ENCODE measurements at regions of chr16 and their contacts with region 1.

Region 1: DNA sequence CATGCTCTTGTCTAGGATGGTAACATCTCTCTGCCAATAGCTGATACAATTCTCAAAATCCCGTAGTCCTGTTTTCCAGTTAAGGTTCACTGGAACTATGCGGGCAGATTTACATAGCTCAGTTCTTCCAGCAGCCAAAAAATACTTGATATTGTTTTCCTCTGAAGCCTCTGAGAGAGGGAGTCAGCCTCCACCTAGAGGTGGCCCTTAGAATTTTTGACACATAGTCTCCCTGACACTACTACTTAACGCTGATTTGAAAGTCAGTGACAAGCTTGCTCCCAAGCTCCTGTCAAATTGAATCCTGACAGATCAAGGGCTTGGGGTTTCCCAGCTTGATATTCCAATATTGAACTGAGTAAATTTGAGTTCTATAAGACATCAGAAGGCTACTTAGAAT is 1780.1 kb downstream of the TP53TG3F start:
- DNase-seq: no peak
- ATAC-seq: no peak
- H3K4me3 ChIP-seq: no peak overlapping the region
- H3K4me3 Mint-ChIP-seq: no peak overlapping the region
- H3K27ac ChIP-seq: no peak overlapping the region
- H3K27ac Mint-ChIP-seq: no peak overlapping the region
- H3K4me1 ChIP-seq: no peaks in the 10 kb centered on the region
- H3K4me1 Mint-ChIP-seq: no peaks in the 10 kb centered on the region
- H3K27me3 ChIP-seq: no peaks in the 10 kb centered on the region
- H3K27me3 Mint-ChIP-seq: no peaks in the 10 kb centered on the region

Region 2: GRCh38 chr16:35409503-35409902 is 169.9 kb after region 1 on chr16:
- CTCF ChIA-PET with region 1: interaction called in 1 of 2 experiments, 12 read pairs
- POLR2A ChIA-PET with region 1: no interaction called
- DNase-seq: no peak
- ATAC-seq: no peak
- H3K4me3 ChIP-seq: no peak overlapping the region
- H3K4me3 Mint-ChIP-seq: no peak overlapping the region
- H3K27ac ChIP-seq: no peak overlapping the region
- H3K27ac Mint-ChIP-seq: no peak overlapping the region
- H3K4me1 ChIP-seq: no peaks in the 10 kb centered on the region
- H3K4me1 Mint-ChIP-seq: no peaks in the 10 kb centered on the region
- H3K27me3 ChIP-seq: no peaks in the 10 kb centered on the region
- H3K27me3 Mint-ChIP-seq: no peaks in the 10 kb centered on the region